Breast epithelium (tissue), 4 donors: ENCODE measurements at regions of chr1 and their contacts with region 1.

Region 1: DNA sequence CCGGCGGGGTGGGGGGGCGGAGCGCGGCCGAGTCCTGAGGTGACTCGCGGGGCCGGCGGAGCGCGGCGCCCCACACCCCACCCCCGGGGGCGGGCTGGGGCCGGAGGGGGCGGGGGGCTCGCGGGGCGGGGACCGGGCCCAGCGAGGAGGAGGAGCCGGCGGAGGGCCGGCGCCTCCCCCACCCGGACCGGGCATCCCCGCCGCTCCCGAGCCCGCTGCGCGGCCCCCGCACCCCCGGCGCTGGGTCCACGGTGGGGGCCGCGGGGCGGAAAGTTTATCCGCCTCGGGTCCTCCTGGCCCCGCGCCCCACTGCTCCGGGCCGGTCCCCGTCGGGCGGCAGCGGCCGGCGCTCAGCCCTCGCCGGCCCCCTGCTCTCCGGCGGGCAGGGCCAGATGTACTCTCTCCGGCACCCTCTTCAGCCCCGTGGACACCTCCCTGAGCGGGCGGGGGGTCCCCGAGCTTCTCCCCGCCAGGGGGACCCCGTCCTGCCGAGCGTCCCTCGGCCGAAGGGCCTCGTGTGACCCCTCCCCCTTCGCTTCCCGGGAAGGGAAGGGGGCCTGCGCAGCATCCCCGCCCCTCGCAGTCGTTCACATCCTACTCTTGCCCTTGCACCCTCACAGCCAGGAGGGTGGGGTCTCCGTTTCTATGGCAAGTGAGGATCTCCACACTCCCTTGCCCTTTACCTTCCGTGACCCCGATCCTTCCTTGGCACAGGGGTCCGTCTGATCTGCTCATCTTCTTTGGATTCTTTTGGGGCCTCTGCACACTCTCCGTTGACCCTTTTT is 659 bp downstream of the CAMTA1 start:
- DNase-seq: peak in 1 of 2 donors; percentile 31
- H3K4me3 ChIP-seq: peak overlapping the region; percentile 73 to 94 (median 88)
- H3K27ac ChIP-seq: peak overlapping the region; percentile 81 to 93
- H3K4me1 ChIP-seq: peaks cover 6 to 11% of the 10 kb centered on the region in 2 donors
- H3K27me3 ChIP-seq: no peaks in the 10 kb centered on the region
- CTCF ChIP-seq: no peak
- POLR2A ChIP-seq: no peak

Region 2: GRCh38 chr1:6747674-6748073 is 38.2 kb before region 1 on chr1:
- intact Hi-C with region 1: loop called (anchors 1 kb)
- DNase-seq: no peak
- H3K4me3 ChIP-seq: no peak overlapping the region
- H3K27ac ChIP-seq: no peak overlapping the region
- H3K4me1 ChIP-seq: no peaks in the 10 kb centered on the region
- H3K27me3 ChIP-seq: no peaks in the 10 kb centered on the region
- CTCF ChIP-seq: no peak
- POLR2A ChIP-seq: no peak